Posterior cingulate gyrus (tissue), 11 donors: ENCODE measurements at regions of chr18 and their contacts with region 1.

Region 1: GRCh38 chr18:72544092-72544886 is at the start of gene CBLN2:
- DNase-seq: peak; percentile 68 to 98 (median 81)

Region 2: GRCh38 chr18:70781860-70782453 is 1762.3 kb before region 1 on chr18:
- intact Hi-C with region 1: loop called (anchors 10 kb)
- DNase-seq: peak in 7 of 10 donors; percentile 12 to 72 (median 56)

Region 3: DNA sequence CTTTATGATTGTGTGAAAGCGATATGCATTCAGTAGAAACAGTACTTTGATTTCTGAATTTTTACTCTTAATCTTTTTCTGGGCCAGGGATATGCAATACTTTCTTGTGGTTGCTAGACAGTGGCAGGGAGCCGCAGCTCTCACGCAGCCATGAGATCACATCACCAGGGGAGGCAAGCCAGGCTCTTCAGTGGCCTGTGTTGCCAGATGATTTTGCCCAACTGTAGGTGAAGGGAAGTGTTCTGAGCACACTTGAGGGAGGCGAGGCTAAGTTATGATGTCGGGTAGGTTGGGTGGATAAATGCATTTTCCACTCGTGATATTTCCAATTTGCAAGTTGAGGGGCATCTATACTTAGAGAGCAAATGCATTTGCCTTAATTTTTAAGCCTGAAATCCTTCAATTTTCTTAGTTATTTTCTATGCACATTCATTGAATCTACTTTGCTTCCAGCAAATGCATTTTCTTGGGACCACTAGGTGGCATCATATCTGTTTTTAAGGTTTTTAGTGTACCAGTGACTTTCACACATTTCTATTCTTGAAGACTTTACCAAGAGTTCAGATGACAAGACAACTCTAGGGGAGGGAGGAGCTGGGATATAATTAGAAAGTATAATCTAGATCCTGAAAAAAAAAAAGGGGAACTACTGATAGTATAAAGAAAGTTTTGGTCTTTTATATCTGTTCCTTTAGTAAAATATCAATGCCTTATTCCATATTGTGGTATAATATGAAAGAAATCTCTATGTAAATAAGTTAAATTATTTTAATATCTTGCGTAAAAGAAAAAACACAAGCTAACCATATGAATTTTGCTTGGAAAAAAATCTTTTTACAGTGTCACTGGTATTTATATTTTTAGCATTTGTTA is 1612.1 kb before region 1 on chr18:
- intact Hi-C with region 1: loop called (anchors 2 kb)
- DNase-seq: no peak

Region 4: GRCh38 chr18:71398531-71398930 is 1145.8 kb before region 1 on chr18:
- intact Hi-C with region 1: loop called (anchors 5 kb)
- DNase-seq: peak in 7 of 10 donors; percentile 13 to 75 (median 51)

Region 5: GRCh38 chr18:72637299-72637698 is 93.0 kb after region 1 on chr18:
- intact Hi-C with region 1: loop called (anchors 5 kb)
- DNase-seq: peak in 7 of 10 donors; percentile 12 to 92 (median 43)